Activated CD4-positive, alpha-beta T cell treated with anti-CD3 and anti-CD28 coated beads, Interleukin-2, amount 10 ng/mL, durations not matched to agents 24 days and 14 days (primary cell): ENCODE measurements at regions of chr22 and their contacts with region 1.

Region 1: DNA sequence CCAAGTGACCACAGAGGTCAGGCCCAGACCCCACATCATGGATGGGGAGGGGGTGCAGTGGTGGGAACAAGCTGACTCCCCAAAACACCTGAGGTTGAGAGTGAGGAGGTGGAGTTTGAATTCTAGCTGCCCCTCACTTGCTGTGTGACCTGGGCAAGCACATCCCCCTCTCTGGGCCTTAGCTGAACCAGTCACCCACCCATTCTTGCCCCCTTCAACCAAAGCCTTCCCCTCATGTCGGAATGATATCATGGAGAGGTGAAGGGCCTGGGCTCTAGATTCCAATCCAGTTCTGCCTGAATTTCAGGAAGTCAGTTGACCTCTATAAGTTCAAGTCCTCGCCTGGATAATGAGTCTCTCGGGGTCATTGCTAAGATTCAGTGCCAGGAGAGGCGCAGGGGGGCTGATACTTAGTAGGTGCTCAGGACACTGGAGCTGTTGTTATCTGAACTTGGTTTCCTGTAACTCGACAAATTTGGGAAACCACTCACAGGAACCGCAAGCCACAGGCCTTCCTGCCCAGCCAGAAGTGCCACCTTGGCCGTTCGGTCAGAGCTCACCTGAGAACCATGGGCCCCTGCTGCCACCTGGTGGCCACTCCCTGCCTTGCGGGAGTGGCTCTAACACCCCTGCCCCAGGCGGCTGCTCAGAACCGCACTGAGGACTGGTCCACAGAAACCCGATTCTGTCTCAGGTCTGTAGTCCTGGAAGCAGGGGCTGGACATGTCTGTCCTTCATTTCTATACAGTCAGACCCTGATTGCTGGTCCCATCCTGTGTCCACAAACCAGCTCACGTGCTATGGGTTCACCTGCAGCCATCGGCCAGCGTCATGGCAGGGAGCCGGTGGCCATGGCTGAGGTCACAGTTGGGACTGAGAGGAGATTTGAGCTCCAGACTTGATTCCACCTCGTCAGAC is 6.9 kb downstream of the CDC42EP1 start:
- DNase-seq: peak; percentile 97
- H3K4me3 Mint-ChIP-seq: peak overlapping the region; percentile 59
- H3K27ac Mint-ChIP-seq: peak overlapping the region; percentile 68
- H3K4me1 Mint-ChIP-seq: peaks cover 19% of the 10 kb centered on the region
- H3K27me3 Mint-ChIP-seq: peaks cover 28% of the 10 kb centered on the region

Region 2: GRCh38 chr22:37544955-37545699 is 22.0 kb before region 1 on chr22:
- intact Hi-C with region 1: loop called (anchors 1 kb)
- DNase-seq: peak; percentile 88
- H3K4me3 Mint-ChIP-seq: no peak overlapping the region
- H3K27ac Mint-ChIP-seq: no peak overlapping the region
- H3K4me1 Mint-ChIP-seq: peaks cover 29% of the 10 kb centered on the region
- H3K27me3 Mint-ChIP-seq: peaks cover 11% of the 10 kb centered on the region

Region 3: GRCh38 chr22:37591823-37592404 is 24.8 kb after region 1 on chr22:
- intact Hi-C with region 1: loop called (anchors 2 kb)
- DNase-seq: no peak
- H3K4me3 Mint-ChIP-seq: peak overlapping the region; percentile 81
- H3K27ac Mint-ChIP-seq: peak overlapping the region; percentile 48
- H3K4me1 Mint-ChIP-seq: peaks cover 10% of the 10 kb centered on the region
- H3K27me3 Mint-ChIP-seq: peaks cover 7% of the 10 kb centered on the region